HEK293 (cell line): ENCODE measurements at regions of chr4 and their contacts with region 1.

Region 1: DNA sequence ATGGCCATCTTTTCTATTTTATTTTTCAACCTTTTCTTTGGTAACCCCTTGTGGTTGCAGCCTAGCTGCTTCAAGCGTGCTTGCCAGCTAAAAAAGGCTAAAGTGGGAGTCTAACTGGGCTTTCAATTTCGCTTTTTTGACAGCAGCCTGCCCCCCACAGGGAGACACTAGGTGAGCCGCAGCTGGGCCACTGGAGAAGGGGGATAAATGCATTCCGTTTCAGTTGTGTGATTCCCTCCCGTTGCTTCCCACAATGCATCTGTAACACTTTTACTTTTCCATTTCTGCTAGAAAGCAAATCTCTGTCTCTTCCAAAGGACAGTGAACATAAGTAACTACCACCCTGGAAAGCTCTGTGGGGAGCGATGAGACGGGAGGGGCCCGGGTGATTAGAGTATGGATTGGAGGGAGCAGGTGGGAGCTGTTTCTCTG is 86.3 kb upstream of the RAPGEF2 start:
- H3K4me3 ChIP-seq: no peak overlapping the region
- H3K27ac ChIP-seq: no peak overlapping the region
- H3K4me1 ChIP-seq: peaks cover 5% of the 10 kb centered on the region; the same call in 1 of the 2 replicates
- CTCF ChIP-seq: peak; percentile 52; the same call in 1 of the 2 replicates

Region 2: DNA sequence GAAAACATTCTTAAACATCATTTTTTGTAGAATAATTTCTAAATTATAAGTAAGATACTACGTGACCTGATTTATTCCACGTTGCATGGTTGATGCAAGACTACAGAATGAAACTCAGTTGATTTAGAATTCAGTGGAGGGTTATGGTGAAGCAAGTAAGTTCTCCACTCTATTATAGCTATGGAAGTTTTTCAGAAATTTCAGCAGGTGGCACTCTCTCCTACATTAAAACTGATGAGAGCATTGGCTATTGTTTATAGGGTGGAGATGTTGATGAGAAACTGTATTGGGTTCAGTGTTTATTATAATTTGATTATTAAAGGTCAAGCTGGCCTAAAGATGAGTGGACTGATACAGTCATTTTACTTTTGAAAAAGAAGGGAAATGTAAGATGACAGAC is 159.8 kb before region 1 on chr4:
- CTCF ChIA-PET with region 1: interaction called, 10 read pairs
- POLR2A ChIA-PET with region 1: no interaction called
- H3K4me3 ChIP-seq: no peak overlapping the region
- H3K27ac ChIP-seq: no peak overlapping the region
- H3K4me1 ChIP-seq: no peaks in the 10 kb centered on the region
- CTCF ChIP-seq: no peak

Region 3: GRCh38 chr4:159042097-159042605 is 25.5 kb after region 1 on chr4:
- CTCF ChIA-PET with region 1: no interaction called
- POLR2A ChIA-PET with region 1: no interaction called
- H3K4me3 ChIP-seq: no peak overlapping the region
- H3K27ac ChIP-seq: no peak overlapping the region
- H3K4me1 ChIP-seq: no peaks in the 10 kb centered on the region
- CTCF ChIP-seq: no peak